ENCODE measurements at regions of chr21 and their contacts with region 1.

Region 1: GRCh38 chr21:37916310-37917051 is at the start of gene KCNJ6:
- DNase-seq: peak; percentile 46 to 58
- ATAC-seq: peak; percentile 92
- H3K4me3 ChIP-seq: peak within 1 kb of the TSS; percentile 59
- H3K27ac ChIP-seq: peak within 1 kb of the TSS; percentile 90 to 91
- H3K4me1 ChIP-seq: peaks cover 46% of the 10 kb centered on the region
- CTCF ChIP-seq: peak; percentile 37
- EP300 ChIP-seq: no peak
- POLR2A ChIP-seq: no peak
- RAD21 ChIP-seq: peak; percentile 57 to 68
- polyA plus RNA-seq, gene KCNJ6: 1.4 and 2.3 TPM in 2 replicates

Region 2: DNA sequence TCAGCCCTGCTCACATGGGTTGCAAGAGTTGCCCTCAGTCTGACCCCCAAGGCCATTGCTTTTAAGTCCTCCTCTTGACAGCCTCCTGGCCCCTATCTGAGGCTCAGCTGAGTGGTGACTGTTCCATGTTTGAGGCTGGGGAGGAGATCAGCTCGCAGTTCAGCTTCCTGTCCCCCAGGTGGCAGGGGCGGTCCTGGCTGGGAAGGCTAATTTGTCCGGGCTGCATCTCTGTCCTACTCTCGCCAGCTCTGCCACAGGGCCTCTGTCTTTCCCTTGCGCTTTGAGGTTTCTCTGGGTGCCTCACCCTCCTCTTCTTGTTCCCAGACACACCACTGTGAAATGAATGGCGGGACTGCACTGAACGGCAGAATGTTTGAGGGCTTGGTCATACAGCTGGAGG is 157.5 kb before region 1 on chr21:
- CTCF ChIA-PET with region 1: interaction called, 10 read pairs
- POLR2A ChIA-PET with region 1: no interaction called
- DNase-seq: peak; percentile 23 to 48
- ATAC-seq: peak; percentile 55 to 81; a peak in 4 of 6 replicates
- H3K4me3 ChIP-seq: no peak overlapping the region
- H3K27ac ChIP-seq: peak overlapping the region in 1 of 2 experiments; percentile 17; a peak in 1 of 6 replicates
- H3K4me1 ChIP-seq: peaks cover 9% of the 10 kb centered on the region
- CTCF ChIP-seq: peak; percentile 38
- EP300 ChIP-seq: no peak
- POLR2A ChIP-seq: no peak
- RAD21 ChIP-seq: peak; percentile 67

Region 3: GRCh38 chr21:37866027-37866426 is 50.5 kb before region 1 on chr21:
- CTCF ChIA-PET with region 1: no interaction called
- POLR2A ChIA-PET with region 1: no interaction called
- DNase-seq: peak in 1 of 2 experiments; percentile 2
- ATAC-seq: no peak
- H3K4me3 ChIP-seq: no peak overlapping the region
- H3K27ac ChIP-seq: no peak overlapping the region
- H3K4me1 ChIP-seq: peaks cover 20% of the 10 kb centered on the region
- CTCF ChIP-seq: no peak
- EP300 ChIP-seq: no peak
- POLR2A ChIP-seq: no peak
- RAD21 ChIP-seq: no peak